ENCODE measurements at regions of chr5 and their contacts with region 1.

Region 1: DNA sequence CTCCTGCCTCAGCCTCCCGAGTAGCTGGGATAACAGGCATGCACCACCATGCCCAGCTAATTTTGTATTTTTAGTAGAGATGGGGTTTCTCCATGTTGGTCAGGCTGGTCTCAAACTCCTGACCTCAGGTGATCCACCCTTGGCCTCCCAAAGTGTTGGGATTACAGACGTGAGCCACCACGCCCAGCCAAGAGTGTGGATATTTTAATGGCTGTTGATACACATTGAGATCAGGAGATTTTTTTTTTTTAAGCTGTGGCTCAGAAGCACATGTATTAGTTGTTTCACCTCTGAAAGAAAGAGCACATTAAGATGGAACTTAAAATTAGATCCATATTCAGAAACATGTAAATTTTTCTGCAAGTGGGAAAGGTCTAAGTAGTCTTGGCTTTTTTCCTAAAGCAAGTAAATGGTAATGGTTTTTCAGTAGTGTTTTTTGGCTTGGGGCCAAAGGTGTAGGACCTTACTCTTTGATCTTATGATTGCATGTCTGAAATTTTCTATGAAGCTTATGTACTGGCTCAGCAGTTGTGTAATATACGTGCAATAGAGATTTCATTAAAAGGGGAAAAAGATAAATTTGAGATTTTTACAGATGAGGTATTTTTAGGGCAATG is 9.9 kb downstream of the RBM27 start:
- DNase-seq: no peak
- ATAC-seq: no peak
- H3K4me3 Mint-ChIP-seq: no peak overlapping the region
- H3K27ac Mint-ChIP-seq: no peak overlapping the region
- H3K4me1 Mint-ChIP-seq: peaks cover 56% of the 10 kb centered on the region
- H3K27me3 Mint-ChIP-seq: no peaks in the 10 kb centered on the region
- CTCF ChIP-seq: no peak

Region 2: DNA sequence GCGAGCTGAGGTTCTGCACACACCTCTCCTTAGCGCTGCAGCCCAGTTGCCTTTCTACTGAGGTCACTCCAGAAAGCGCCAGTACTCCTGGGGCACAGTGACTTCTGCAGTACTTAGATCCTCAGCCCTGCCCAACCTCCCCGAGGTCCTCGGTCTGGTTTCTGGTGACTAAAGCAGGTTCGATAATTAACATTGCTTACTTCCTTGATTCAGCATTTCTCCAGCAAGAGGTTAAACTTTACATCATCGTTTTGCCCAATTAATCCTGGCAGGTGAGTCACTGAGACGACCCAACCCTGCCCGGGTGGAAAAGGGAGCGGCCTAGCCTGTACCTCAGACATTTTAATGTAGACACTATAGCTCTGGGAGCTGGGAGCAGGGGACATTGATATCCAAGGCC is 185.6 kb before region 1 on chr5:
- CTCF ChIA-PET with region 1: no interaction called
- POLR2A ChIA-PET with region 1: no interaction called
- intact Hi-C with region 1: no loop called
- DNase-seq: no peak
- ATAC-seq: no peak
- H3K4me3 Mint-ChIP-seq: no peak overlapping the region
- H3K27ac Mint-ChIP-seq: no peak overlapping the region
- H3K4me1 Mint-ChIP-seq: no peaks in the 10 kb centered on the region
- H3K27me3 Mint-ChIP-seq: no peaks in the 10 kb centered on the region
- CTCF ChIP-seq: no peak

Region 3: GRCh38 chr5:146173597-146173996 is 39.7 kb before region 1 on chr5:
- CTCF ChIA-PET with region 1: no interaction called
- POLR2A ChIA-PET with region 1: no interaction called
- intact Hi-C with region 1: loop called (anchors 5 kb)
- DNase-seq: no peak
- ATAC-seq: no peak
- H3K4me3 Mint-ChIP-seq: no peak overlapping the region
- H3K27ac Mint-ChIP-seq: peak overlapping the region; percentile 6
- H3K4me1 Mint-ChIP-seq: peaks cover 13% of the 10 kb centered on the region
- H3K27me3 Mint-ChIP-seq: no peaks in the 10 kb centered on the region
- CTCF ChIP-seq: no peak

Region 4: DNA sequence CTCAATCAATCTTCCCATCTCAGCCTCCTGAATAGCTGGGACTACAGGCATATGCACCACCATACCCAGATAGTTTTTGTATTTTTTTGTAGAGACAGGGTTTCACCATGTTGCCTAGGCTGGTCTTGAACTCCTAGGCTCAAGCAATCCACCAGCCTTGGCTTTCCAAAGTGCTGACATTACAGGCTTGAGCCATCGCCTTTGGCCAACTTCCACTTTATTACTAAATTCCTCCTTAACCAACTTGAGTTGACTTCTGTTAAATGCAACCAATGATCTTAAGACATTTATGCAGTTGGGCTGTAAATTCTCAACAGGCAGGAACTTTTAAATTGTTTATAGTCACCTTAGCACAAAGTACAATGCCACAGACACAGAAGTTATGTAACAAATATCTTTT is 33.6 kb before region 1 on chr5:
- CTCF ChIA-PET with region 1: no interaction called
- POLR2A ChIA-PET with region 1: interaction called, 10 read pairs
- intact Hi-C with region 1: loop called (anchors 5 kb)
- DNase-seq: no peak
- ATAC-seq: no peak
- H3K4me3 Mint-ChIP-seq: no peak overlapping the region
- H3K27ac Mint-ChIP-seq: no peak overlapping the region
- H3K4me1 Mint-ChIP-seq: peaks cover 25% of the 10 kb centered on the region
- H3K27me3 Mint-ChIP-seq: no peaks in the 10 kb centered on the region
- CTCF ChIP-seq: no peak

Region 5: DNA sequence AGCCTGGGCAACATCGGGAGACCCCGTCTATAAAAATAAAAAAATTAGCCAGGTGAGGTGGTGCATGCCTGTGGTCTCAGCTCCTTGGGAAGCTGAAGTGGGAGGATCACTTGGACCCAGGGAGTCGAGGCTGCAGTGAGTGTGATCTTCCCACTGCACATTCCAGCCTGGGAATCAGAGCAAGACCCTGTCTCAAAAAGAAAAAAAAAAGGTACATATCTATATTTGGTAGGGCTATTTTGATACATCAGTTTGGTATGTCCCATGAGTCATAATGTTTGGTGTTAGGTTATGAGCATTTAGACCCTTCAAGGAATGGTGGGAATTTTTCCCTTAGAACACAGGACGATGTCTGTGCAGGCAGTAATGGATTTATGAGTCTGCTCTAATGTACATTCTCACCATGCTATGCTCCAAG is 70.0 kb after region 1 on chr5:
- CTCF ChIA-PET with region 1: no interaction called
- POLR2A ChIA-PET with region 1: no interaction called
- intact Hi-C with region 1: loop called (anchors 10 kb)
- DNase-seq: no peak
- ATAC-seq: no peak
- H3K4me3 Mint-ChIP-seq: no peak overlapping the region
- H3K27ac Mint-ChIP-seq: no peak overlapping the region
- H3K4me1 Mint-ChIP-seq: no peaks in the 10 kb centered on the region
- H3K27me3 Mint-ChIP-seq: no peaks in the 10 kb centered on the region
- CTCF ChIP-seq: no peak

Measured in activated B cell treated with CpG ODN at 0.5 μM for 24 hours (primary cell).